Colonic mucosa (tissue), 4 donors: ENCODE measurements at regions of chr6 and their contacts with region 1.

Region 1: GRCh38 chr6:13538084-13538483 is 36.3 kb upstream of the SIRT5 start:
- DNase-seq: no peak
- H3K4me3 ChIP-seq: no peak overlapping the region
- H3K27ac ChIP-seq: no peak overlapping the region
- H3K4me1 ChIP-seq: no peaks in the 10 kb centered on the region
- H3K27me3 ChIP-seq: no peaks in the 10 kb centered on the region
- CTCF ChIP-seq: peak; percentile 29

Region 2: GRCh38 chr6:12903246-12903645 is 634.8 kb before region 1 on chr6:
- intact Hi-C with region 1: loop called (anchors 10 kb)
- DNase-seq: no peak
- H3K4me3 ChIP-seq: no peak overlapping the region
- H3K27ac ChIP-seq: no peak overlapping the region
- H3K4me1 ChIP-seq: no peaks in the 10 kb centered on the region
- H3K27me3 ChIP-seq: no peaks in the 10 kb centered on the region
- CTCF ChIP-seq: no peak

Region 3: GRCh38 chr6:13383328-13384163 is 154.5 kb before region 1 on chr6:
- intact Hi-C with region 1: loop called (anchors 10 kb)
- DNase-seq: no peak
- H3K4me3 ChIP-seq: no peak overlapping the region
- H3K27ac ChIP-seq: peak overlapping the region; percentile 64
- H3K4me1 ChIP-seq: peaks cover 20% of the 10 kb centered on the region
- H3K27me3 ChIP-seq: no peaks in the 10 kb centered on the region
- CTCF ChIP-seq: no peak